PC-3 (cell line): ENCODE measurements at regions of chrX and their contacts with region 1.

Region 1: GRCh38 chrX:18994738-18995137 is 10.8 kb upstream of the PHKA2 start:
- DNase-seq: peak; percentile 89
- ATAC-seq: peak; percentile 88
- H3K4me3 ChIP-seq: peak overlapping the region; percentile 53
- H3K27ac ChIP-seq: peak overlapping the region; percentile 98
- H3K4me1 ChIP-seq: peaks cover 74% of the 10 kb centered on the region
- H3K27me3 ChIP-seq: no peaks in the 10 kb centered on the region
- CTCF ChIP-seq: no peak

Region 2: GRCh38 chrX:18899796-18900447 is 94.8 kb before region 1 on chrX:
- CTCF ChIA-PET with region 1: no interaction called
- POLR2A ChIA-PET with region 1: no interaction called
- intact Hi-C with region 1: no loop called
- DNase-seq: no peak
- ATAC-seq: no peak
- H3K4me3 ChIP-seq: no peak overlapping the region
- H3K27ac ChIP-seq: no peak overlapping the region
- H3K4me1 ChIP-seq: no peaks in the 10 kb centered on the region
- H3K27me3 ChIP-seq: no peaks in the 10 kb centered on the region
- CTCF ChIP-seq: peak; percentile 58

Region 3: GRCh38 chrX:18938710-18939109 is 56.0 kb before region 1 on chrX:
- CTCF ChIA-PET with region 1: interaction called, 3 read pairs
- POLR2A ChIA-PET with region 1: no interaction called
- intact Hi-C with region 1: loop called (anchors 1 kb)
- DNase-seq: peak; percentile 80
- ATAC-seq: peak; percentile 94
- H3K4me3 ChIP-seq: no peak overlapping the region
- H3K27ac ChIP-seq: peak overlapping the region; percentile 44
- H3K4me1 ChIP-seq: peaks cover 22% of the 10 kb centered on the region
- H3K27me3 ChIP-seq: no peaks in the 10 kb centered on the region
- CTCF ChIP-seq: no peak

Region 4: GRCh38 chrX:18956303-18957032 is 38.3 kb before region 1 on chrX:
- CTCF ChIA-PET with region 1: no interaction called
- POLR2A ChIA-PET with region 1: interaction called, 5 read pairs
- intact Hi-C with region 1: loop called (anchors 2 kb)
- DNase-seq: peak; percentile 69
- ATAC-seq: peak; percentile 71
- H3K4me3 ChIP-seq: peak overlapping the region; percentile 50; the same call in 1 of the 2 replicates
- H3K27ac ChIP-seq: peak overlapping the region; percentile 91
- H3K4me1 ChIP-seq: peaks cover 37% of the 10 kb centered on the region
- H3K27me3 ChIP-seq: no peaks in the 10 kb centered on the region
- CTCF ChIP-seq: no peak